ENCODE measurements at regions of chr3 and their contacts with region 1.

Region 1: DNA sequence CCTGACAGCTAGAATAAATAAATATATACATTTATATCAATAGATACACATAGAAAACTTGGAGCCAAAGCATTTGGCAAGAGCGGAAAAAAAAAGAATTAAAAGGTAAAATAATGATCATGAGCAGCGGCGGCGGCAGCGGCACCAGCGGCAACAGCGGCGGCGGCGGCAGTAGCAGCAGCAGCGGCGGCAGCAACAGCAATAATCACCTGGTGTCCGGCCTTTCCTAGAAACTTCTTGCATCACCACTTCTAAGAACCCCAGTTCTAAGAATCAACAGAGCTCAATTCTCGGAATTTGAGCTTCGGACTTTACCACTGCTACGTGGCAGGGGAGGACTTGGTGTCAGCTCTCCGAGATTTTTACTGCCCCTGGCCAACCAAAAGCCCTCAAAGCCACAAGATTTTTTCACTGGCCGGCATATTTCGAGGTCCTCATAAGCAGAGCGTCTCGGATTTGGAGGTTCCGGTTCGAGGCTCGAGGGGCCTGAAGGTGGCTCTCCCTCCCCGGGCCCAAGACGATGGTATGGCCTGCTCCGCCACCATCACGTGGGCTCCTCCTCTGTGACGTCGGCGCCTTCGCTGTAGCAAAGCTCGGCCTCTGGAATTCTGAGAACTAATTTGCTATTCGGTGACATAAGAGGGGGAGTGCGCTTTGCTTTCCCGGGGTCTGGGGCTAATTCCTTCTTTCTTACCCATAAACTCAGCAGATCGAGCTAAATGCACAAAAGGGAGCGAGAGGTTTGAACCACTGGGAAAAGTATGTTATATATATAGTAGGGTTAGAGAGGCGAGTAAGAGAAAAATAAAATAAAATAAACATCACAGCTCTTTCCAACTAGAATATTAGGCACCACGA is at the start of gene BCL6:
- DNase-seq: peak; percentile 92 to 95 (median 94)
- H3K4me3 ChIP-seq: peak within 1 kb of the TSS; percentile 71 to 98
- H3K4me3 Mint-ChIP-seq: peak within 1 kb of the TSS; percentile 95 to 99 (median 96)
- H3K27ac ChIP-seq: peak within 1 kb of the TSS; percentile 82
- H3K27ac Mint-ChIP-seq: peak within 1 kb of the TSS; percentile 99
- H3K4me1 ChIP-seq: peaks cover 53% of the 10 kb centered on the region
- H3K4me1 Mint-ChIP-seq: peaks cover 24 to 74% (median 52%) of the 10 kb centered on the region in 4 donors
- H3K27me3 ChIP-seq: no peaks in the 10 kb centered on the region
- H3K27me3 Mint-ChIP-seq: no peaks in the 10 kb centered on the region
- total RNA-seq, gene BCL6: 31.4 to 34.8 TPM

Region 2: DNA sequence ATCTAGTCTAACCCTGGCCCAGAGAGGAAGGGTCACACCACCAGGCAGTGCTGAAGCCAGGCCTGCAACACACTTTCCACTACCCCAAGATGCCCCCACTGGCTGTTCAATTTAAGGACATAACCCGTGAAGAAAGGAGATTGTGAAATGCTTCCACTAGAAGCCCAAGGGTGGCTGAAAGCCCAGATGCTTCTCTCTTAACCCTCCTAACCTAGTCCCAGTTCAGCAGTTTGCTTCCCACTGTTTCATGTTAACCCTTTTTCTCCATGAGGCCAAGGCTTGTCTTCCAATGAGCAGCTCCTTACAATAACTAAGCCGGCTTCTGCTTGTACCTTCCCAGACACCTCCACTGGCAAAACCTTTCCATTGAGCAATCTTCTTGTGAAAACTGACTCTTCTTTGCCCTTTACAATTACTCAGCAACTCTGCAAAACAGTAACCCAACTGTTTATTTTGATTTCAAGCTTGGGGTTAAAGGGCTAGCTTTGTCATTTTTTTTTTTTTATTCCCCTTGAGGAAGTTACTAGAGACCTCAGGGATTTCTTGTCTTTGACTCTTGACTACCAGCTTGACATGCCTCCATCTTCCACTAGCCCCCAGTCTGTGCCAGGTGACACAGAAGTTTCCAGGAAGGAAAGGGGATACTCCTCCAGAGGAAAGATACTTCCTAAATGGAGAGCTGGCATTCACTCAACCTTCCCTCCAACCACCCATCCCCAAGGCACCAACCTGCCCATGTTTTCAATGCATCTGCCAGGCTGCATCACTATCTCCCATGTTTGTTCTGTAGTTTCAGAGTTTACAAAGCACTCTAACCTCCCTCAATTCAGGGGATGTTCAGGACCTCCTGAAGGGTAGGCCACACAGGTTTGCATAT is 209.9 kb after region 1 on chr3:
- CTCF ChIA-PET with region 1: interaction called, 5 read pairs
- POLR2A ChIA-PET with region 1: no interaction called
- intact Hi-C with region 1: loop called (anchors 5 kb)
- DNase-seq: no peak
- H3K4me3 ChIP-seq: no peak overlapping the region
- H3K4me3 Mint-ChIP-seq: no peak overlapping the region
- H3K27ac ChIP-seq: no peak overlapping the region
- H3K27ac Mint-ChIP-seq: peak overlapping the region in 2 of 7 donors; percentile 6 to 21
- H3K4me1 ChIP-seq: peaks cover 35% of the 10 kb centered on the region
- H3K4me1 Mint-ChIP-seq: peaks cover 23 to 59% (median 33%) of the 10 kb centered on the region in 4 donors
- H3K27me3 ChIP-seq: no peaks in the 10 kb centered on the region
- H3K27me3 Mint-ChIP-seq: no peaks in the 10 kb centered on the region

Region 3: DNA sequence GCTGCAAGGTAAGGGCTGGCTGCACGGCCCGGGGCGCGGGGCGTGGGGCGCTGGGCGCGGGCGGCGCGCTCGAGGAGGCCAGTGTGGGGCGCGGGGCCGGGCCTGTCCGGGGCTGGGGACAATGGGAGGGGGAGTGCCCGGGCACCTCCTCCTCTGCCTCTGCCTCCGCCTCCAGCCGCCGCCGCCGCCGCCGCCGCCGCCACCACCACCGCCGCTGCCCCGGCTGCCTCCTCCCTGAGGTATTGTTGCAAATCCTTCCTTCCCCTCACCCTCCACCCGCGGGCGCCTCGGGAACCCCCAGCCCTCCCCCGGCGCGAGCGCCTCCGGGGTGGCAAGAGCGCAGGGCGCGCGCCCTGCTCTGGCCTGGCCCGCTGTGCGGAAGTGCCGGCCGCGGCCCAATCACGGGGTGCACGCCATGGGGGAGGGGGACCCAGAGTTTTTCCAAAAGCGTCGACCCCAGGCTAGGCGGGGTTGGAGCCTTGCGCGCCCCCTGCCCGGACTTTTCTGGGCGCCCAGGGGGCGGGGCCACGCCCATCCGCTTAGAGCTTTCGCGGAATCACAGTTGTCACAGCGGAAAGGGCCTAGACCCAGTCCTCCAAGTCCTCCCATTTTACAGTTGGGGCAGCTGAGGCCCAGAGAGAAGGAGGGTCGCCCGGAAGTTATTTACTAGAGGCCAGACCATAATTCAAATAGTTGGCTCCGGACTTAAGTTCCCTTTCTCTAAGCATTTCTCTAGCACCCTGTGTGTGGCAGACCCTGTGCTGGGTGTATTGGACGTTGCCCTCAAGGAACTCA is 408.8 kb after region 1 on chr3 and contains the start of gene LPP:
- CTCF ChIA-PET with region 1: interaction called, 20 read pairs
- POLR2A ChIA-PET with region 1: interaction called, 17 read pairs
- intact Hi-C with region 1: loop called (anchors 1 kb)
- DNase-seq: peak; percentile 80 to 94 (median 83)
- H3K4me3 ChIP-seq: peak within 1 kb of the TSS; percentile 67 to 79
- H3K4me3 Mint-ChIP-seq: peak within 1 kb of the TSS; percentile 86 to 96 (median 91)
- H3K27ac ChIP-seq: peak within 1 kb of the TSS; percentile 76
- H3K27ac Mint-ChIP-seq: peak within 1 kb of the TSS; percentile 91 to 96 (median 92)
- H3K4me1 ChIP-seq: peaks cover 53% of the 10 kb centered on the region
- H3K4me1 Mint-ChIP-seq: peaks cover 44 to 72% (median 53%) of the 10 kb centered on the region in 4 donors
- H3K27me3 ChIP-seq: no peaks in the 10 kb centered on the region
- H3K27me3 Mint-ChIP-seq: no peaks in the 10 kb centered on the region
- total RNA-seq, gene LPP: 24.3 to 25.0 TPM

Region 4: DNA sequence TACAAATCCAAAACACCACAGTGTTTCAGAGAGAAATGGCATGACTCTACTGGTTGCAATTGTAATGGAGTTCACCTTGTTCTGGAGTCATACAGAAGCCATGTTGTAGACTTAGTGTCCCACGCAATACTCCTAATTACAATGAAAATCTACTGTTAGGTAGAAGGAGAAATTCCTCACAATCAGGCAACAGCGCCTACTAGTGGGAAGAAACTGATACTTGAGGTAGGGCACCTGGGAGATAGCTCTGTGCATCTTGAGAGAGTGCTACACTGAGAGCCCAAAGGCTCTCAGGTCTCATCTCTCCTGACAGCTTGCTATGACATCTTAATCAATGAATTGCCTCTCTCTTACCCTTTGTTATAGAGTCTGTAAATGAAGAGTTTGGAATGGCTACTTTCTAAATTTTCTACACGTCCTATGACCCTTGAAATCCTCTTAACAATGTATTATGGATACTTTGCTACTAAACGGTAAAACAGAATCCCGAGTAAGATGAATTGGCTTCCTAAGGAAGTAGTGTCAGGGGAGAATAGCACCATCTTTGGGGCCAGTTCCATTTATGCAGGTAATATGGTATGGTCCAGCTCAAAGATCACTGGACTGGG is 1003.7 kb after region 1 on chr3:
- CTCF ChIA-PET with region 1: interaction called, 218 read pairs
- POLR2A ChIA-PET with region 1: interaction called, 35 read pairs
- intact Hi-C with region 1: loop called (anchors 1 kb)
- DNase-seq: peak; percentile 55 to 63 (median 59)
- H3K4me3 ChIP-seq: no peak overlapping the region
- H3K4me3 Mint-ChIP-seq: no peak overlapping the region
- H3K27ac ChIP-seq: no peak overlapping the region
- H3K27ac Mint-ChIP-seq: no peak overlapping the region
- H3K4me1 ChIP-seq: no peaks in the 10 kb centered on the region
- H3K4me1 Mint-ChIP-seq: peaks cover 0 to 5% (median 0%) of the 10 kb centered on the region in 4 donors
- H3K27me3 ChIP-seq: no peaks in the 10 kb centered on the region
- H3K27me3 Mint-ChIP-seq: no peaks in the 10 kb centered on the region

Region 5: GRCh38 chr3:189132231-189132707 is 1386.8 kb after region 1 on chr3:
- CTCF ChIA-PET with region 1: interaction called, 391 read pairs
- POLR2A ChIA-PET with region 1: interaction called, 48 read pairs
- intact Hi-C with region 1: loop called (anchors 1 kb)
- DNase-seq: peak; percentile 70 to 93 (median 77)
- H3K4me3 ChIP-seq: peak overlapping the region in 1 of 2 donors; percentile 5
- H3K4me3 Mint-ChIP-seq: peak overlapping the region; percentile 64 to 91 (median 78)
- H3K27ac ChIP-seq: peak overlapping the region; percentile 62
- H3K27ac Mint-ChIP-seq: peak overlapping the region; percentile 87 to 98 (median 94)
- H3K4me1 ChIP-seq: peaks cover 30% of the 10 kb centered on the region
- H3K4me1 Mint-ChIP-seq: peaks cover 25 to 51% (median 39%) of the 10 kb centered on the region in 4 donors
- H3K27me3 ChIP-seq: no peaks in the 10 kb centered on the region
- H3K27me3 Mint-ChIP-seq: no peaks in the 10 kb centered on the region